A673 (cell line): ENCODE measurements at regions of chr18 and their contacts with region 1.

Region 1: GRCh38 chr18:3297025-3297984 is 35.4 kb downstream of the MYL12B start:
- DNase-seq: peak; percentile 93
- H3K4me3 ChIP-seq: peak overlapping the region; percentile 60
- H3K27ac ChIP-seq: peak overlapping the region; percentile 71
- H3K4me1 ChIP-seq: no peaks in the 10 kb centered on the region
- H3K27me3 ChIP-seq: no peaks in the 10 kb centered on the region
- CTCF ChIP-seq: peak; percentile 74

Region 2: DNA sequence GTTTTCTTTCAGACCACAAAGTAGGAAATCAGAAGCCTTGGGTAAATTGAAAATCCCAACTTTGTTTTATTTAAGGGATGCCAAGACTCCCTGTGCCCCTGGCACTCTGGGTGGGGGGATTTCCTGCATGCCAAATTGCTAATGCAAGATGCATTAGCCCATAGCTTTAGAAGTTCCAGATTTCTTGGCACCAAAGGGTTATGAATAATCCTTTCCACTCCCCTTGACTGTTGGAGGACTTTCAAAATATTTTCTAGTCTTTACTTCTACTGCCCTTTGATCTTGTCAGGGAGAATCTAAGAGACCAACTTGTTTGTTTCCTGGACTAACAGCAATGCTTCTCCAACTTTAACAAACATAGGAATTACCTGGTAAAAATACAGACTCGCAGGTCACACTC is 70.9 kb after region 1 on chr18:
- CTCF ChIA-PET with region 1: no interaction called
- POLR2A ChIA-PET with region 1: no interaction called
- intact Hi-C with region 1: no loop called
- DNase-seq: no peak
- H3K4me3 ChIP-seq: no peak overlapping the region
- H3K27ac ChIP-seq: no peak overlapping the region
- H3K4me1 ChIP-seq: peaks cover 6% of the 10 kb centered on the region
- H3K27me3 ChIP-seq: no peaks in the 10 kb centered on the region
- CTCF ChIP-seq: no peak

Region 3: DNA sequence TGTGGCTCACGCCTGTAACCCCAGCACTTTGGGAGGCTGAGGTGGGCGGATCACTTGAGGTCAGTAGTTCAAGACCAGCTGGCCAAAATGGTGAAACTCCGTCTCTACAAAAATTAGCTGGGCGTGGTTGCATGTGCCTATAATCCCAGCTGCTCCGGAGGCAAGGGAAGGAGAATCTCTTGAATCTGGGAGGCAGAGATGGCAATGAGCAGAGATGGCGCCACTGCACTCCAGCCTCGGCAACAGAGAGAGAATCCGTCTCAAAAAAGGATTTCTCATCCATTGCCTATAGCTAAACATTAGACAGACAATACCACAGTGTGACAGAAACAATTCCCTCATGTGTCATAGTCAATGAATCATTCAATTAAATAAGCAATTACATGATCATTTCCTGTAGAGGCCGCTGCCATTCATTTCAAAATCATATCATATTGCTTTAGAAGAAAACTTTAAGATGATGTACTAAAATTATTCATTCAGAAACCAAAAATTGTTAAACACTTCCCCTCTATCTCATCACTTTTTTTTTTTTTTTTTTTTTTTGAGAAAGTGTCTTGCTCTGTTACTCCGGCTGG is 83.2 kb after region 1 on chr18:
- CTCF ChIA-PET with region 1: no interaction called
- POLR2A ChIA-PET with region 1: no interaction called
- intact Hi-C with region 1: loop called (anchors 5 kb)
- DNase-seq: peak; percentile 79
- H3K4me3 ChIP-seq: no peak overlapping the region
- H3K27ac ChIP-seq: no peak overlapping the region
- H3K4me1 ChIP-seq: peaks cover 5% of the 10 kb centered on the region
- H3K27me3 ChIP-seq: no peaks in the 10 kb centered on the region
- CTCF ChIP-seq: peak; percentile 42

Region 4: GRCh38 chr18:3481696-3482210 is 184.4 kb after region 1 on chr18:
- CTCF ChIA-PET with region 1: no interaction called
- POLR2A ChIA-PET with region 1: interaction called, 11 read pairs
- intact Hi-C with region 1: no loop called
- DNase-seq: peak; percentile 69
- H3K4me3 ChIP-seq: no peak overlapping the region
- H3K27ac ChIP-seq: no peak overlapping the region
- H3K4me1 ChIP-seq: no peaks in the 10 kb centered on the region
- H3K27me3 ChIP-seq: no peaks in the 10 kb centered on the region
- CTCF ChIP-seq: peak; percentile 80

Region 5: GRCh38 chr18:3585656-3586509 is 288.6 kb after region 1 on chr18:
- CTCF ChIA-PET with region 1: no interaction called
- POLR2A ChIA-PET with region 1: no interaction called
- intact Hi-C with region 1: loop called (anchors 5 kb)
- DNase-seq: peak; percentile 91
- H3K4me3 ChIP-seq: no peak overlapping the region
- H3K27ac ChIP-seq: peak overlapping the region; percentile 74
- H3K4me1 ChIP-seq: peaks cover 28% of the 10 kb centered on the region
- H3K27me3 ChIP-seq: no peaks in the 10 kb centered on the region
- CTCF ChIP-seq: peak; percentile 91

Region 6: DNA sequence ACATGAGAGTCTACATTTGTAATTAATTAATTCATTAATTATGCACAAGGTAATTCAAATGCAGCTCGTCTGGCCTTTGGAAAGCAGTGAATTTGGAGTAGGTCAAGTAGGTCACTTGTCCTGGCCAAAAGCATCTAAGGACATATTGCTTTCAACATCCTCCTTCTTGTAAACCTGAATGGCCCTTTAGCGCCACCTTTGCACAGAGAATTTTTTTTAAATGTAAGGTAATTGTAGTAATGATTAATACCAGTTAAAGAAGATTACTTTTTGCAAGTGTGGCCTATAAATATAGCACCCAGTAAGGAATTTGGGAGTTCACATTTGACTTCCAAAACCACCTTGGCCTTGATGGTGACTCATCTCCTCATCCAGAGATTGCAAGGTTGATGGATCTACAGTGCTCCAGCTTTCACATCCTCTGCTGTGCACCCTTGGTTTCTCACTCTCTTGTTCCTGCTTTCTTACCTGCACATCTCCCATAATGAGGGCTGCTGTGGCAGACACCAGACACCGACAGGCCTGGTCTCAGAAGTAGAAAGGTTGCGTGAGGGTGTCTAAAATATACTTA is 634.3 kb after region 1 on chr18:
- CTCF ChIA-PET with region 1: no interaction called
- POLR2A ChIA-PET with region 1: no interaction called
- intact Hi-C with region 1: no loop called
- DNase-seq: no peak
- H3K4me3 ChIP-seq: no peak overlapping the region
- H3K27ac ChIP-seq: no peak overlapping the region
- H3K4me1 ChIP-seq: peaks cover 11% of the 10 kb centered on the region
- H3K27me3 ChIP-seq: no peaks in the 10 kb centered on the region
- CTCF ChIP-seq: 0 out of 2 replicates have a peak, but pooled peaks have one; percentile 16